ENCODE measurements at regions of chr11 and their contacts with region 1.

Region 1: GRCh38 chr11:132312701-132313111 is 942.3 kb downstream of the NTM start:
- DNase-seq: no peak
- H3K4me3 ChIP-seq: no peak overlapping the region
- H3K27me3 ChIP-seq: no peaks in the 10 kb centered on the region
- CTCF ChIP-seq: peak; percentile 55

Region 2: DNA sequence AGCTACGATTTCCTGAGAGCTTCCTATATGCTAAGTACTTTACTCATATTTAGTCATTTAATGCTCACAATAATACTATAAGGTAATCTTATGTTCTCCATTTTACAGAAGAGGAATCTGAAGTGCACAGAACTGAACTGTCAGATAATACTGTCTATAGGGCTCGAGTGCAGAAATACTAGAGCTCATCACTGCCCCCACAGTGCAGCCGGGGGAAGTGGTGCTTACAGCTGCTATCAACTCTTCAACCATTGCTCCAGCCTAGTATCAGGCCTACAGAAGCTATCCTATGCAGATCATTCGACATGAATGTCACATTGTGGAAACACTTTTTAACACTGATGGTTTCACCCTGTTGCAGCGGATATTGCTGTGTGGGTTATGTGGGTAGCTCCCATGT is 12.4 kb before region 1 on chr11:
- CTCF ChIA-PET with region 1: interaction called, 42 read pairs
- POLR2A ChIA-PET with region 1: no interaction called
- DNase-seq: no peak
- H3K4me3 ChIP-seq: no peak overlapping the region
- H3K27me3 ChIP-seq: no peaks in the 10 kb centered on the region; the same call in 1 of the 2 replicates
- CTCF ChIP-seq: peak; percentile 43

Region 3: GRCh38 chr11:132620423-132620822 is 307.7 kb after region 1 on chr11:
- CTCF ChIA-PET with region 1: no interaction called
- POLR2A ChIA-PET with region 1: no interaction called
- DNase-seq: no peak
- H3K4me3 ChIP-seq: no peak overlapping the region
- H3K27me3 ChIP-seq: no peaks in the 10 kb centered on the region
- CTCF ChIP-seq: no peak

Measured in BJ (cell line).